Activated CD4-positive, alpha-beta T cell treated with anti-CD3 and anti-CD28 coated beads for 36 hours (primary cell): ENCODE measurements at regions of chr2 and their contacts with region 1.

Region 1: DNA sequence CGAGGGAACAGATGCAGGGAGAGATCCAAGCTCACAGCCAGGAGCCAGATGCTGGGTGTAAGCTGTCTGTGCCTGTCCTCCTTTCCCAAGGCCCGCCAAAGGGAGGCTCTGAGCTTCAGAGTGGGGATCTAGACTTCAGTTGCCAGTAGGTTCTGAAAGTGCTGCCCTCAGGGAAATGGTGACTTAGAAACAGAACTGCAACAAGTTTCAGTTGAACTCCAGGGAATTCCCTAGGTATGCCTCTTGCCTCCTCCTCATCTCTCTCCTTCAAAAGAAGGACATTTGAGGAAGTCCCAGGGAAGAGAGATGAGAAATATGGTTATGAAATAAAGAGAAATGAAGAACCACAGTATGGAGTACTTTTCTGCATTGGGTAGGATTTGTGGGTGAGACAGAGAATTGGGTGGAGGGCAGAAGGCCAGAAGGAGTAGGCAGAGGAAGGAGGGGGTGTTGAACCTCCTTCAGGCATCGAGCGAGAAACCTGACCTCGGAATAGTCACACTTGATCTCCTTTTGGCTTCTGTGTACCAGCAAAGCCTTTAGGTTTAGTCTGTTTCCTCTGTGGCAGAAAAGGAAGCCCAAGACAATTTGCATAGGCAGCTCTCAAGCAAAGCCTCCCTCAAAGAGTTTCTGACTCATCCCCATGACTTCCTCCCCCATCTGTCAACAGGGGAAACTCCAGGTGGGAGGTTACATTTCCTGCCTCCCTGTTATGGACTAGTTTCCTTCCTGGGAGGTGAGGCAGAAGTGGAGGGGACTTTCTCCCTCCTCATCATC is 45.7 kb downstream of the QPCT start:
- DNase-seq: peak; percentile 77
- ATAC-seq: peak; percentile 95
- H3K4me3 Mint-ChIP-seq: peak overlapping the region; percentile 30
- H3K27ac Mint-ChIP-seq: peak overlapping the region; percentile 75
- H3K4me1 Mint-ChIP-seq: no peaks in the 10 kb centered on the region
- H3K27me3 Mint-ChIP-seq: peaks cover 5% of the 10 kb centered on the region

Region 2: DNA sequence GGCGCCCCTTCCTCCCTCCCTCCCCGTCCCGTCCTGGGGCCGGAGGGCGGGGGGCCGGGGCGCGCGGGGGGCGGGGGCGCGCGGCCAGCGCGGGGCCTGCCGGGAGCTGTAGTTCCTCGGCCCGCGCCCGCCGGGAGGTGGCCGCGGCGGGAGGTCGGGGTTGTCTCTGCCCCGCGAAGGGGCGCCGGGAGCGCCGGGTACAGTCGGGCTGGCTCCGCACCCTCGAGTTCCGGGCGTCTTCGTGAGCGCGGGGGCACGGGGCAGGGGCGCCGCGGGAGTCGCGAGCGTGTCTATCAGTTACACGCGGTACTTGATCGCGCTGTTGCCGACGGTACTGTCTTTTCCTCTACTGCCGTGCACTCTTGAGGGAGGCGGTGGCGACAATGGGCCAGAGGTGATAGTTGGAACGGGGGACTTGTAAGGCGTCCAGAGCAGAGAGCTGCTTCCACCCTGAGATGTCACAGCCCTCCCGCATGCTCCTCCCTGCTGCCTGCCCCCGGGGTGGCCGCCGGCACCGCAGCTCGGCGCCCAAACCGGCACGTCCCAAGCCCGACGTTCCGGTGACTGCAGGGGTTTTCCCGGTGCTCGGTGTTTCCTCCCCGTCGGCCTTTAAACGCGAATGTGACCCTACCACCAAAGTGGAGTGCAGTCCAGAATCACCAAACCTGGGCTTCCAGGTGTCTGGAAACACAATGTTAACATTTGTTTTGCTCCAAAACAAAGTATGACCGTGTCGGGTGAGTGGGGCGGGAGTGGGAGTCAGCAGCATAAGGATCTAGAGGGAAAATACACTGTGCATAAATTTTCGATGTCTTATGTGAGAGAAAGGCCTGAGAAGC is 65.2 kb before region 1 on chr2 and contains the start of gene PRKD3:
- CTCF ChIA-PET with region 1: interaction called, 4 read pairs
- POLR2A ChIA-PET with region 1: no interaction called
- intact Hi-C with region 1: loop called in 1 of 2 experiments (anchors 2 kb)
- DNase-seq: peak; percentile 66
- ATAC-seq: peak; percentile 76
- H3K4me3 Mint-ChIP-seq: peak within 1 kb of the TSS; percentile 91
- H3K27ac Mint-ChIP-seq: peak within 1 kb of the TSS; percentile 92
- H3K4me1 Mint-ChIP-seq: peaks cover 27% of the 10 kb centered on the region
- H3K27me3 Mint-ChIP-seq: peaks cover 17% of the 10 kb centered on the region
- total RNA-seq, gene PRKD3: 17.4 to 22.8 TPM

Region 3: GRCh38 chr2:37405781-37406180 is 15.6 kb after region 1 on chr2:
- CTCF ChIA-PET with region 1: interaction called, 36 read pairs
- POLR2A ChIA-PET with region 1: no interaction called
- intact Hi-C with region 1: no loop called
- DNase-seq: no peak
- ATAC-seq: no peak
- H3K4me3 Mint-ChIP-seq: no peak overlapping the region
- H3K27ac Mint-ChIP-seq: no peak overlapping the region
- H3K4me1 Mint-ChIP-seq: no peaks in the 10 kb centered on the region
- H3K27me3 Mint-ChIP-seq: peaks cover 2% of the 10 kb centered on the region

Region 4: DNA sequence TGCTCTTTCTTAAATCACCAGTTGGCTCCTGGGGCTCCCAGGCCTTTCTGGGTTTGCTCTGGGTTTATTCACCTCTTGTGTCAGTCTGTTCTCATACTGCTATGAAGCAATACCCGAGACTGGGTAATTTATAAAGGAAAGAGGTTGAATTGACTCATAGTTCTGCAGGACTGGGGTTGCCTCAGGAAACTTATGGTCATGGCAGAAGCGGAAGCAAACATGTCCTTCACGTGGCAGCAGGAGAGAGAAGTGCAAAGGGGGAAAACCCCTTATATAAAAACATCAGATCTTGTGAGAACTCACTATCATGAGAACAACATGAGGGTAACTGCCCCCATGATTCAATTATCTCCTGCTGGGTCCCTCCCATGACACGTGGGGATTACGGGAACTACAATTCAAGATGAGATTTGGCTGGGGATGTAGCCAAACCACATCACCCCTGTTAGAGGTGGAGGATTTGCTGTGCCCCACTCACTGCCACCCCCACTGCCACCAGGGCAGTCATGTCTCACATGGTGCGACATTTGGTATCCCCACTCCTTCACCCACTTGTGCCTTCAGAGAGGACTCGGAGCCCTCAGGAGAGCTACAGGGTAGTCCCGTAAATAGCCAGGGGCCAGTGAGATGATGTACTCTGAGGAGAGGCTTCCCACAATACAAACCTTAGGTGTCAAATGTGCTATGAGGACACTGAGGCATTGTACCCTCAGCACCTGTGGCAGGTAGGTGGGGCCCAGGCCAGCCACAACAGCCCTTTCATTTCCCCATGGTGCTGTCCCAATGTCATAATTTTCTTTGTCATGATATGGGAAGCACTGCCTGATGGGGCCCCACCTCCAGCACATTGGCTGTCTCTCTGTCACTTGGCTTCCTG is 245.6 kb after region 1 on chr2:
- CTCF ChIA-PET with region 1: no interaction called
- POLR2A ChIA-PET with region 1: no interaction called
- intact Hi-C with region 1: no loop called
- DNase-seq: peak; percentile 85
- ATAC-seq: peak; percentile 85
- H3K4me3 Mint-ChIP-seq: peak overlapping the region; percentile 33
- H3K27ac Mint-ChIP-seq: peak overlapping the region; percentile 83
- H3K4me1 Mint-ChIP-seq: peaks cover 65% of the 10 kb centered on the region
- H3K27me3 Mint-ChIP-seq: no peaks in the 10 kb centered on the region

Region 5: DNA sequence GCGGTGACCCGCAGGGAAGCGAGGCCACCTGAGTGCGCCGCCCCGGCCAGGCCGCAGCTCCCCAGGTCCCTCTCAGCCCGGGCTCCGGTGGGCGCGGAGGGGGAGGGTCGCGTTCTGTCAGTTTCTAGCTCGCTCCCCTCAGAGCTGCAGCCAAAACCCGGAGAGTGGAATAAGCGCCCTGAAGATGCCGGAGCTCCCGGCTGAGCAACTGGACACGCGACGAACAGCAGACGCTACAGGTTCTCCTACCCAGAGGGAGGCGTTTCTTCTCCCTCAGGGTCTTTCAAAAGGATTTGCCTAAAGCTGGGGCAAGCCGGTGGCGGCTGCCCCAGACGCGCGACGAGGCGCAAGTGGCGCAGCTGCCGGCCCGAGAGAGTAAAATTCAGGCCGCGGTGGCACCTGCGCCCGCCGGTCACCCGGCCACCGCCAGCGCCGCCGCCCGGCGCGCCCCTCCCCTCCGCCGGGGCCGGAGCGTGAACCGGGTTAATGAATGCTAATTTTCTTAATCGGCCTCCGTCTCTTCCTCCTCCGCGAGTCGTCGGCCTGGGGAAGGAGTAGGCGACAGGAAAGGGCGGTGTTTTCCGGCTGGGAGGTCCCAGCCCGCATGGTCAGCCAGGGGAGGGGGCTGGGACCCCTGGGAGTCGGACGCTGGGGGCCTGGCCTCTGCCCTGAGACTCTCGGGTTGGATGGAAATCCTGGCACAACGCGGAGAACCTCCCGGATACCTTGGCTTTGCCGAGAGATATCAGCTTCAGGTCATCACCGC is 282.1 kb after region 1 on chr2:
- CTCF ChIA-PET with region 1: interaction called, 5 read pairs
- POLR2A ChIA-PET with region 1: no interaction called
- intact Hi-C with region 1: loop called in 1 of 2 experiments (anchors 5 kb)
- DNase-seq: peak; percentile 80
- ATAC-seq: peak; percentile 34
- H3K4me3 Mint-ChIP-seq: peak overlapping the region; percentile 83
- H3K27ac Mint-ChIP-seq: peak overlapping the region; percentile 83
- H3K4me1 Mint-ChIP-seq: peaks cover 40% of the 10 kb centered on the region
- H3K27me3 Mint-ChIP-seq: no peaks in the 10 kb centered on the region

Region 6: DNA sequence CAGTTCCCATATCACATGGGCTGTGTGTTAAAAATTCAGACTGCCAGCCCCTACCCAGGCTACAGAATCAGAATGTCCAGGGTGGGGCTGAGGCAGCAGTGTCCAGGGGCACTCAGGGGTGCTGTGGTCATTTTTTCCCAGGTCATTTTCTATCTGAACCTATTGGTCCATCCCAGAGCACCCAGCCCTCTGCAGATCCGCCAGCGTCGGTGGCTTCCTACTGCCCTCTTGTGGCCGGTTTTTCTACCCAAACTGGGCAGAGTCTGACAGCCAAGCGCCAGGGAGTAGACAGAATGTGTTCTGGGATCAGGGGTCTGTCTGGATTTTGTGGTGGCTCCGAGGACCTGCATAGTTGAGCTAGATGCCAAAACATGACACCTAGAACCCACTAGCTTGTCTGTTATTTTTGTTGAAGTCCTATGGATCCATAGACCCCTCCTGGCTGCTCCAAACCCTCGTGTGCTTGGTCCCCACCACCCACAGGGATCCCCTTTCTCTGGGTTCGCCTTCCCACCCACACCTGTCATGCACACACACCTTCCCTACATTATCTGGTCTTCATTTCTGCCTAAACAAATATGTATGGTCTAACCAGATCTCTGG is 500.8 kb after region 1 on chr2:
- CTCF ChIA-PET with region 1: interaction called, 17 read pairs
- POLR2A ChIA-PET with region 1: no interaction called
- intact Hi-C with region 1: loop called (anchors 5 kb)
- DNase-seq: peak; percentile 83
- ATAC-seq: peak; percentile 43
- H3K4me3 Mint-ChIP-seq: no peak overlapping the region
- H3K27ac Mint-ChIP-seq: no peak overlapping the region
- H3K4me1 Mint-ChIP-seq: peaks cover 46% of the 10 kb centered on the region
- H3K27me3 Mint-ChIP-seq: peaks cover 8% of the 10 kb centered on the region